ENCODE measurements at regions of chr6 and their contacts with region 1.

Region 1: GRCh38 chr6:3281631-3282475 is 23.1 kb downstream of the PSMG4 start:
- DNase-seq: no peak
- ATAC-seq: peak in 3 of 4 donors; percentile 26 to 66 (median 37)
- H3K4me3 ChIP-seq: no peak overlapping the region
- H3K27ac ChIP-seq: peak overlapping the region in 10 of 12 donors; percentile 5 to 71 (median 50)
- H3K4me1 ChIP-seq: peaks cover 0 to 28% (median 18%) of the 10 kb centered on the region in 12 donors
- H3K27me3 ChIP-seq: no peaks in the 10 kb centered on the region
- CTCF ChIP-seq: no peak
- POLR2A ChIP-seq: no peak

Region 2: GRCh38 chr6:3456755-3457466 is 175.1 kb after region 1 on chr6 and contains the start of gene SLC22A23:
- intact Hi-C with region 1: loop called in 7 of 10 experiments (anchors 5 to 10 kb)
- DNase-seq: peak; percentile 62 to 76 (median 71)
- ATAC-seq: peak; percentile 41 to 90 (median 80)
- H3K4me3 ChIP-seq: peak within 1 kb of the TSS; percentile 54 to 84 (median 64)
- H3K27ac ChIP-seq: peak within 1 kb of the TSS in 10 of 12 donors; percentile 1 to 82 (median 60)
- H3K4me1 ChIP-seq: peaks cover 0 to 41% (median 29%) of the 10 kb centered on the region in 12 donors
- H3K27me3 ChIP-seq: peaks cover 0 to 60% (median 3%) of the 10 kb centered on the region in 9 donors
- CTCF ChIP-seq: peak; percentile 48 to 89 (median 74)
- POLR2A ChIP-seq: no peak
- total RNA-seq, gene SLC22A23: 4.4 to 12.4 (median 5.2) TPM

Region 3: GRCh38 chr6:3732345-3733141 is 450.7 kb after region 1 on chr6:
- intact Hi-C with region 1: loop called (anchors 1 to 2 kb)
- DNase-seq: peak; percentile 66 to 80 (median 72)
- ATAC-seq: peak in 3 of 4 donors; percentile 74 to 81 (median 80)
- H3K4me3 ChIP-seq: no peak overlapping the region
- H3K27ac ChIP-seq: peak overlapping the region in 1 of 12 donors; percentile 6
- H3K4me1 ChIP-seq: peaks cover 0 to 21% (median 7%) of the 10 kb centered on the region in 12 donors
- H3K27me3 ChIP-seq: no peaks in the 10 kb centered on the region
- CTCF ChIP-seq: peak; percentile 73 to 93 (median 85)
- POLR2A ChIP-seq: no peak

Region 4: DNA sequence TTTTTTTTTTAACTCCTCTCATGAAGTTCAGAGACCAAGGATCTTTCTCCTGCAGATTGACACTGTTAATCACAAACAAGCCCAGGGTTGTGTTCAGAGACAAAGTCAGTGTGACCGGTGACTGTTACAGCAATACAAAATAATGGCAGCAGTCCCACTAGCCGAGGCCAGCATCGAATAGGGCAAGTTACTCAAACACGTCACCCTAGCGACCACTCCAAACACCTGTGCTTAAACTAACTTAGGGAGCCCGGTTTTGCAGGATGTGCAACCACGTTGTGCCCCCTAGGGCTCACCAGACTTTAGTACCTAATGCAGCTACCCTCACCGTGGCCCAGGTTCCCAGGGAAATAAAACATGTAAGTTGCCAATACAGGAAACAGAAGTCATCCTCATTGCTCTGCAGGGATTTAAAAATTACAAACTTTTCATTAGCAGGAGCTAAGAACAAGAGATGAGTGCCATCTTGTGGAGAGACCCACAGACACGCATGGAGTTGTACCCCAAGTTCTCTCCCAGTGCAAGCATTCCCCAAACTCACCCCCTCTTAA is 605.4 kb after region 1 on chr6:
- intact Hi-C with region 1: loop called in 1 of 10 experiments (anchors 10 kb)
- DNase-seq: no peak
- ATAC-seq: peak in 3 of 4 donors; percentile 23 to 36 (median 25)
- H3K4me3 ChIP-seq: no peak overlapping the region
- H3K27ac ChIP-seq: peak overlapping the region in 1 of 12 donors; percentile 23
- H3K4me1 ChIP-seq: peaks cover 0 to 52% (median 26%) of the 10 kb centered on the region in 12 donors
- H3K27me3 ChIP-seq: no peaks in the 10 kb centered on the region
- CTCF ChIP-seq: peak; percentile 37 to 70 (median 56)
- POLR2A ChIP-seq: no peak

Region 5: DNA sequence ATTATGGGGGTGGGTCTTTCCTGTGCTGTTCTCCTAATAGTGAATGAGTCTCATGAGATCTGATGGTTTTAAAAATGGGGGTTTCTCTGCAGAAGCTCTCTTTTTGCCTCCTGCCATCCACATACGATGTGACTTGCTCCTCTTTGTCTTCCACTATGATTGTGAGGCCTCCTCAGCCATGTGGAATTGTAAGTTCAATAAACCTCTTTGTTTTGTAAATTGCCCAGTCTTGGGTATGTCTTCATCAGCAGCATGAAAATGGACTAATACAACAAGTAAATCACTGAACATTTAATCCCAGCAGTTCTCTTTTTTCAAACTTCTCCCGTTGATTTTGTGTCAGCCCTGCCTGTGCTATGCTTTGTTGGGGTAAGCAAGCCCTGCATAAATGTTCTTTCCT is 701.9 kb after region 1 on chr6:
- intact Hi-C with region 1: loop called in 3 of 10 experiments (anchors 5 to 10 kb)
- DNase-seq: no peak
- ATAC-seq: no peak
- H3K4me3 ChIP-seq: no peak overlapping the region
- H3K27ac ChIP-seq: no peak overlapping the region
- H3K4me1 ChIP-seq: peaks cover 0 to 9% (median 0%) of the 10 kb centered on the region in 12 donors
- H3K27me3 ChIP-seq: no peaks in the 10 kb centered on the region
- CTCF ChIP-seq: no peak
- POLR2A ChIP-seq: no peak

Region 6: GRCh38 chr6:4155848-4156466 is 874.1 kb after region 1 on chr6:
- intact Hi-C with region 1: loop called in 2 of 10 experiments (anchors 5 to 10 kb)
- DNase-seq: peak in 4 of 5 donors; percentile 76 to 79 (median 76)
- ATAC-seq: peak; percentile 61 to 93 (median 88)
- H3K4me3 ChIP-seq: peak overlapping the region in 1 of 12 donors; percentile 5
- H3K27ac ChIP-seq: no peak overlapping the region
- H3K4me1 ChIP-seq: peaks cover 0 to 6% (median 0%) of the 10 kb centered on the region in 12 donors
- H3K27me3 ChIP-seq: no peaks in the 10 kb centered on the region
- CTCF ChIP-seq: peak; percentile 81 to 93 (median 84)
- POLR2A ChIP-seq: no peak

Measured in heart left ventricle (tissue), 16 donors.